ENCODE measurements at regions of chr19 and their contacts with region 1.

Region 1: DNA sequence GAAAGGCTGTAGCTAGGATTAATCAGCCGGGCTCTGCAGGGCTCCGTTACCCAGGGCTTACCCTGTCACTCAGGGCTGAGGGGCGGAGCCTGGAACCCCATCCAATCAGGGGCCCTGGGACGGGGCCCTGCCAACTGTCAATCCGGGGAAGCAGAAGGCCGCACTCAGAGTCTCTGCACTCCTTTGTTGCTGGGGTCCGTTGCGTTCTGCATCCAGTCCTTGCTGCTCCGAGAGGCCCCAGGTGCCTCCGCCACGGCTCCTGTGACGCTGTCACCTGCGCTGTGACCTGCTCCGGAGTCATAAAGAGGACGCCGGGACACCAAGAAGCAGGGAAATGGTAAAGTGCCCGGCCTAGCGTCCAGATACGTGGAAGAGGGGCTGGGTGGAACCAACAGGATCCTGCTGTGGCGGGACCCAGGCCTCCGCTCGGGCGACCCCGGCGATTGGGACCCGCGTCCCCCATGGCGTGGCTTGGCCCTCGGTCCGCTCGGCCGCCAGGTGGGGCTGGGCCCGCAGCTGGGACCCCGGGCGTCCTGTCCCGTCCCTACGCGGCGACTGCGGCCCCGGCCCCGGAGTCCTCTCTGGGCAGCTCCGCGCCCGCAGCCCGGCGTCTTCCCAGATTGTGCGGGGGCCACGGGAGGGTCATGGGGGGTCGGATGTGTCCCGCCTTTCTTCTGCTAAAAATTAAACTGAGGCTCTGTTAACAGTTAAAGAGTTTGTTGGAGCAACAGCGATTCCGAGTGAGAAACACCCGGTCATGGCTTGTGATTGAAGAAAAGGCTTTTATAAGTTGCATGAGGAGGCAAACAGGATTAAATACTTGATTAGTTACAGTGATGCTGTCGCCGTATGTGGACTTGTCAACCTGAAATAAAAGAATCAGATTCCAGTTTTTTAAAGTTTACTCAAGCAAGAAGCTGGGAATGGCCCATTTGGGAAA is at the start of gene ZNF491:
- DNase-seq: peak; percentile 97
- H3K4me3 ChIP-seq: peak within 1 kb of the TSS; percentile 67 to 80 (median 76)
- H3K27ac ChIP-seq: peak within 1 kb of the TSS; percentile 83 to 90 (median 88)
- H3K4me1 ChIP-seq: peaks cover 19 to 28% (median 23%) of the 10 kb centered on the region in 4 donors
- H3K27me3 ChIP-seq: no peaks in the 10 kb centered on the region
- CTCF ChIP-seq: peak; percentile 19 to 28 (median 26)
- EP300 ChIP-seq: no peak
- POLR2A ChIP-seq: no peak
- total RNA-seq, gene ZNF491: 2.5 to 4.5 (median 3.7) TPM

Region 2: DNA sequence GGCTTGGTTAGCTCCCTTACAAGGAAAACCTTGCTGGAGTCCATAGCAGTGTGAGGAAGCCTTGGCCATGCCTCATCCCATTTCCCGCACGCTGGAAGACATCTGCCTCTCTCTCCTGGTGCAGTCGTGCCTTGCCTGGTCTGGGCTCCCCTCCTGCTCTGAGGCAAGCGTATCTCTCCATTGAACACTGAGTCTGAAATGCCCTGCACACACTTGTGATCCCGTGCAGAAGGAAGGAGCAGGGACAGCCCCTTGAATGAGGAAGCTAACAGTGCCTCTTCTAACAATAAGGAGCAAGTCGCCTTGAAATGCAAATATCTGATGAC is 15.0 kb after region 1 on chr19:
- intact Hi-C with region 1: loop called (anchors 2 kb)
- DNase-seq: no peak
- H3K4me3 ChIP-seq: peak overlapping the region; percentile 64 to 89 (median 80)
- H3K27ac ChIP-seq: peak overlapping the region; percentile 89 to 91 (median 90)
- H3K4me1 ChIP-seq: peaks cover 11 to 29% (median 20%) of the 10 kb centered on the region in 4 donors
- H3K27me3 ChIP-seq: no peaks in the 10 kb centered on the region
- CTCF ChIP-seq: no peak
- EP300 ChIP-seq: no peak
- POLR2A ChIP-seq: no peak

Region 3: GRCh38 chr19:11881151-11881800 is 82.6 kb after region 1 on chr19:
- intact Hi-C with region 1: loop called (anchors 2 kb)
- DNase-seq: no peak
- H3K4me3 ChIP-seq: no peak overlapping the region
- H3K27ac ChIP-seq: no peak overlapping the region
- H3K4me1 ChIP-seq: peaks cover 0 to 7% (median 2%) of the 10 kb centered on the region in 4 donors
- H3K27me3 ChIP-seq: no peaks in the 10 kb centered on the region
- CTCF ChIP-seq: peak; percentile 64 to 80 (median 75)
- EP300 ChIP-seq: no peak
- POLR2A ChIP-seq: no peak

Measured in esophagus muscularis mucosa (tissue), 4 donors.